ENCODE measurements at regions of chr5 and their contacts with region 1.

Region 1: GRCh38 chr5:177403792-177404640 is 3.6 kb upstream of the PFN3 start:
- DNase-seq: peak; percentile 92
- H3K4me3 Mint-ChIP-seq: peak overlapping the region; percentile 77
- H3K27ac Mint-ChIP-seq: peak overlapping the region; percentile 67
- H3K4me1 Mint-ChIP-seq: peaks cover 9% of the 10 kb centered on the region
- H3K27me3 Mint-ChIP-seq: no peaks in the 10 kb centered on the region
- CTCF ChIP-seq: peak; percentile 90

Region 2: GRCh38 chr5:177317959-177318377 is 86.0 kb before region 1 on chr5:
- CTCF ChIA-PET with region 1: interaction called, 18 read pairs
- intact Hi-C with region 1: no loop called
- DNase-seq: peak; percentile 89
- H3K4me3 Mint-ChIP-seq: no peak overlapping the region
- H3K27ac Mint-ChIP-seq: peak overlapping the region; percentile 65
- H3K4me1 Mint-ChIP-seq: peaks cover 39% of the 10 kb centered on the region
- H3K27me3 Mint-ChIP-seq: no peaks in the 10 kb centered on the region
- CTCF ChIP-seq: peak; percentile 86

Region 3: DNA sequence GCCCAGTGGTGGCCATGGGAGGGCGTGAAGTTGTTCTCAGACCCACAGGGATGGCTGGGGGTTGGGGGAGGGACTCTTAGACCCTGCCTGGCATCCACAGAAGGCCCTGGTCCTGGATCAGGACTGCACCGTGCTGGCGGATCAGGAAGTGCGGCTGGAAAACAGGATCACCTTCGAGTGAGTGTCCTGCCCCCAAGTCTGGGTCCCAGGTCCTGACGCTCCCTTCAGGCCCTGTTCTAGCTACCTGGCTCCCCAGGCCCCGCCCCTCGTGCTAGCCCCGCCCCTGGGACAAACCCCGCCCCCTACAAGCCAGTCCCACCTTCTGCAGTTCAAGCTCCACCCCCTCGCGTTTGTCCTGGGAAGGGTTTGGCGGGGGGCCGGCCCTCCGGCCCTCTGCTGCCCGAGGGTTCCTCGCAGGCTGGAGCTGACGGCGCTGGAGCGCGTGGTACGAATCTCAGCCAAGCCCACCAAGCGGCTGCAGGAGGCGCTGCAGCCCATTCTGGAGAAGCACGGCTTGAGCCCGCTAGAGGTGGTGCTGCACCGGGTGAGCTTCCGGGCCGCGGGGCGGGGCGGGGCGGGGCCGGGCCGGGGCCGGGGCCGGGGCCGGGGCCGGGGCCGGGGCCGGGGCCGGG is 33.4 kb before region 1 on chr5:
- CTCF ChIA-PET with region 1: interaction called, 12 read pairs
- intact Hi-C with region 1: no loop called
- DNase-seq: peak; percentile 78
- H3K4me3 Mint-ChIP-seq: peak overlapping the region; percentile 53
- H3K27ac Mint-ChIP-seq: no peak overlapping the region
- H3K4me1 Mint-ChIP-seq: peaks cover 20% of the 10 kb centered on the region
- H3K27me3 Mint-ChIP-seq: no peaks in the 10 kb centered on the region
- CTCF ChIP-seq: peak; percentile 16

Region 4: GRCh38 chr5:177425801-177426565 is 22.0 kb after region 1 on chr5:
- CTCF ChIA-PET with region 1: interaction called, 33 read pairs
- intact Hi-C with region 1: no loop called
- DNase-seq: peak; percentile 100
- H3K4me3 Mint-ChIP-seq: peak overlapping the region; percentile 93
- H3K27ac Mint-ChIP-seq: peak overlapping the region; percentile 100
- H3K4me1 Mint-ChIP-seq: peaks cover 34% of the 10 kb centered on the region
- H3K27me3 Mint-ChIP-seq: peaks cover 12% of the 10 kb centered on the region
- CTCF ChIP-seq: no peak

Region 5: DNA sequence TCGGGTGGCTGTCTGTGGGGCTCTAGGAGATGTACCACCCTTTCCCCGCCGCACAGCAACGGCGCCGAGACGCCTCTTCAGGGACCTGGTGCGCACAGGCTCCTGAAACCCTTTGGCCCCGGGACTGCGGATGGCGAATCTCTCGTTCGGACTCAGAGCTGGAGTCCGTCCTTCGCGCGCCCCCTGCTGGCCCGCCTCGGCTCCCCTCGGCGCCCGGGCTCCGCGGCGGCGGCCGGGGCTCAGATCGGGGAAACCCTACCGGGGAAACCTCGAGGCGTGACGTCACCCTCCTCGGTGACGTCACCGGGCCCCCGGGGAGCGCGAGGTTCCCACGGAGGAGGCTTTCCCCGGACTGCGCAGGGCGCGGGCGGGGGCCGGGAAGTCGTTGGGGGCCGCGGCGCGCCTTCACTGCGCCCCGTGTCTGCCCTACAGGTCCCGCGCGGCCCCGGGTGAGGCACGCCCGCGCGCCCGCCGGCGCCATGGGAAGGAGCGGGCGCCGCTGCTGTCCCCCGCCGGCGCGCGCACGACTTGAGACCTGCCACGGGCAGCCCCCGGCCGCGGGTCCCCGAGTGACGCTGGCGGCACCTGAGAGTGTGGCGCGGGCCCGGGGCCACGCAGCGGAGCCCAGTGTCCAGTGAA is 50.5 kb after region 1 on chr5:
- CTCF ChIA-PET with region 1: interaction called, 80 read pairs
- intact Hi-C with region 1: loop called (anchors 2 kb)
- DNase-seq: peak; percentile 99
- H3K4me3 Mint-ChIP-seq: peak overlapping the region; percentile 77
- H3K27ac Mint-ChIP-seq: peak overlapping the region; percentile 86
- H3K4me1 Mint-ChIP-seq: peaks cover 40% of the 10 kb centered on the region
- H3K27me3 Mint-ChIP-seq: no peaks in the 10 kb centered on the region
- CTCF ChIP-seq: peak; percentile 96